Natural killer cell (primary cell): ENCODE measurements at regions of chr6 and their contacts with region 1.

Region 1: DNA sequence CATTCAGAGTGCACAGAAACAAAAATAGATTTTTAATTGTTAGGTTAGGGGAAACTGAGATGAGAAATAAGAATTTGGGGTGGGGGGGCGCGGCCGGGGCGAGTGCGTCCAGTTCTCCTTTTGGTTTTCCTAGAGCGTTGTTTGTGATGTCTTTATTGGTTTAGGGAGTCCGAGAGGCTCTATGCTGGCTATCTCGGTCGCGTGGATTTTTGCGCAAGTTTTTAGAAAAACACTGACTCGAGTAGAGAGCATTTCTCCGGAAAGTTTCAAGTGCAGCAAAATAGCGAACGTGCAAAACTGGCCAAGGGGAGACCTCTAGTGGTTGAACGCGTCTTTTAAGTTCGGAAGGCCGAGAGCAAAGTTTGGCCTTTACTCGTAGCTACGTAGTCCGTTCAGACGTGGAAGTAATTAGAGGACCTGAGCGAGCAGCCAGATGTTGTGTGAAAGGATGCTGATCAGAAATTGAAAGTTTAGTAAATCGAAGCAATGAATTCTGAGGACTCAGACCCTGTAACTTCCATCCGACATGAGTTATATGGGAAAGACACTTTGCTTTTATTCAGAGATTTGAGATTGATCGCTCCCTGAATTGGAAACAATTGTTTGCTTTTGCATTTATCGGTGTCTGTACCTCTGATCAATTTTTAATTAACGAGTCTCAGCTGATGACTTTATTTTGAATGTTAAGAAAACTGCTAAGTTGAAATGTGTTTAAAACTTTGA is 2.7 kb downstream of the L3MBTL3 start:
- DNase-seq: peak; percentile 65 to 93
- ATAC-seq: peak; percentile 70 to 83 (median 74)
- H3K4me3 ChIP-seq: peak overlapping the region; percentile 74
- H3K4me3 Mint-ChIP-seq: peak overlapping the region; percentile 99
- H3K27ac ChIP-seq: peak overlapping the region; percentile 80
- H3K27ac Mint-ChIP-seq: peak overlapping the region; percentile 89 to 92
- H3K4me1 ChIP-seq: peaks cover 4% of the 10 kb centered on the region
- H3K4me1 Mint-ChIP-seq: peaks cover 14 to 26% of the 10 kb centered on the region in 2 donors
- H3K27me3 ChIP-seq: no peaks in the 10 kb centered on the region
- H3K27me3 Mint-ChIP-seq: no peaks in the 10 kb centered on the region
- CTCF ChIP-seq: peak; percentile 70

Region 2: DNA sequence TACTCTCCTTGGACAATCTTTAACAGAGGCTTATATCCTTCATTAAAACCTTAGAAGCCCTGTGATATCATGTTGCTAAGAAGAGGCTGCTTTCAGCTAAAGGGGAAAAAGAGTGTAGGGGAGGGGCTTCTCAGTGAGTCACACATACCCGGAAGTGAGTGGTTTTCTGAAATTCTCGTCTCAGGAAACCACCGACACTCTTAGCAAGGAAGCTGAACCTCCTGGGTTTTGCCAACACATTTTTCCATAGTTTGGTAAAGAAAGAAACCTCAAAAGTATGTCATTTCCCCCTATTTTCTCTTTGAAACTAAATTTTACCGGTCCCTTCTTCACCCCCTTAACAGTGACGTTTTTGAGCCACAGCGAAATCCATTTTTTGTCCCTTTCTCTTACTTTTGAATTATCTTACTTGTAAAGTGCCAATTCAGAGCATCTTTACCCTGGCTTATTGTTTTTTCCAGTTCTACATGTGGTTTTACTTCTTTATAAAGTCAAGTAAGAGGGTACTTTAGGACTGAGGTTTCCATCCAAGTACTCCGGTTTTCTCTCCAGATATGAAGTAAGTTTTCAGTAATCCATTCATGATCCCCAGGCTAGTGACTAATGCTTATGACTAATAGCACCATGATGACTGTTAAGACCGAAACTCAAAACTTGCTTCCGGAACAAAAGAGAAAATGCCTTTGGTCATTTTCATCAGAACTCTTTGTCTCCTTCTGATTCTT is 530.4 kb before region 1 on chr6:
- intact Hi-C with region 1: loop called (anchors 5 kb)
- DNase-seq: peak; percentile 46 to 91
- ATAC-seq: peak; percentile 89 to 95 (median 94)
- H3K4me3 ChIP-seq: peak overlapping the region; percentile 46
- H3K4me3 Mint-ChIP-seq: peak overlapping the region; percentile 90
- H3K27ac ChIP-seq: peak overlapping the region; percentile 98
- H3K27ac Mint-ChIP-seq: peak overlapping the region; percentile 99
- H3K4me1 ChIP-seq: peaks cover 10% of the 10 kb centered on the region
- H3K4me1 Mint-ChIP-seq: peaks cover 27% of the 10 kb centered on the region in 2 donors
- H3K27me3 ChIP-seq: no peaks in the 10 kb centered on the region
- H3K27me3 Mint-ChIP-seq: no peaks in the 10 kb centered on the region
- CTCF ChIP-seq: no peak

Region 3: GRCh38 chr6:129598244-129599187 is 422.6 kb before region 1 on chr6:
- intact Hi-C with region 1: loop called (anchors 1 kb)
- DNase-seq: peak in 1 of 2 donors; percentile 84
- ATAC-seq: peak; percentile 87 to 98 (median 94)
- H3K4me3 ChIP-seq: no peak overlapping the region
- H3K4me3 Mint-ChIP-seq: no peak overlapping the region
- H3K27ac ChIP-seq: no peak overlapping the region
- H3K27ac Mint-ChIP-seq: no peak overlapping the region
- H3K4me1 ChIP-seq: no peaks in the 10 kb centered on the region
- H3K4me1 Mint-ChIP-seq: no peaks in the 10 kb centered on the region
- H3K27me3 ChIP-seq: no peaks in the 10 kb centered on the region
- H3K27me3 Mint-ChIP-seq: no peaks in the 10 kb centered on the region
- CTCF ChIP-seq: peak; percentile 87

Region 4: DNA sequence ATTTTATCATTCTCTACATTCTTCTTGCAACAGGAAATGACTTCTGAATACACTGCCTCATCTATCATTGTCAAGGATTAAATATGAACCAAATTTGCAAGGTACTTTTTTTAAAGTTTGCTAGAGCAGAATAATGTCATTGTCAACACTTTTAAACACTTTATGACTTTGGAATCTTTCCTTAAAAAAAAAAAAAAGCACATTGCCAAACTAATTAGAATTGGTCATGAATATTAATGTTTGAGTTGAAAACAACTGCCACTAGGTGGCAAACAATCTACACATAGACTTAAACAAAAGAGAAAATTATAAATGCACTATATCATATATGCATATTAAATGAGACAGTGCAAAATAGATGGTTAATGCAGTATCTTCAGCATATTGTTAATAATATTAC is 127.4 kb before region 1 on chr6:
- intact Hi-C with region 1: loop called (anchors 1 kb)
- DNase-seq: peak in 1 of 2 donors; percentile 54
- ATAC-seq: peak in 1 of 3 donors; percentile 30
- H3K4me3 ChIP-seq: no peak overlapping the region
- H3K4me3 Mint-ChIP-seq: no peak overlapping the region
- H3K27ac ChIP-seq: no peak overlapping the region
- H3K27ac Mint-ChIP-seq: no peak overlapping the region
- H3K4me1 ChIP-seq: no peaks in the 10 kb centered on the region
- H3K4me1 Mint-ChIP-seq: no peaks in the 10 kb centered on the region
- H3K27me3 ChIP-seq: no peaks in the 10 kb centered on the region
- H3K27me3 Mint-ChIP-seq: peaks cover 0 to 3% of the 10 kb centered on the region in 2 donors
- CTCF ChIP-seq: peak; percentile 46

Region 5: GRCh38 chr6:129936329-129937165 is 84.5 kb before region 1 on chr6:
- intact Hi-C with region 1: loop called (anchors 5 kb)
- DNase-seq: peak in 1 of 2 donors; percentile 74
- ATAC-seq: peak in 2 of 3 donors; percentile 49 to 66
- H3K4me3 ChIP-seq: no peak overlapping the region
- H3K4me3 Mint-ChIP-seq: no peak overlapping the region
- H3K27ac ChIP-seq: no peak overlapping the region
- H3K27ac Mint-ChIP-seq: no peak overlapping the region
- H3K4me1 ChIP-seq: no peaks in the 10 kb centered on the region
- H3K4me1 Mint-ChIP-seq: no peaks in the 10 kb centered on the region
- H3K27me3 ChIP-seq: peaks cover 2% of the 10 kb centered on the region
- H3K27me3 Mint-ChIP-seq: peaks cover 23 to 45% of the 10 kb centered on the region in 2 donors
- CTCF ChIP-seq: peak; percentile 69